ENCODE measurements at regions of chr5 and their contacts with region 1.

Region 1: DNA sequence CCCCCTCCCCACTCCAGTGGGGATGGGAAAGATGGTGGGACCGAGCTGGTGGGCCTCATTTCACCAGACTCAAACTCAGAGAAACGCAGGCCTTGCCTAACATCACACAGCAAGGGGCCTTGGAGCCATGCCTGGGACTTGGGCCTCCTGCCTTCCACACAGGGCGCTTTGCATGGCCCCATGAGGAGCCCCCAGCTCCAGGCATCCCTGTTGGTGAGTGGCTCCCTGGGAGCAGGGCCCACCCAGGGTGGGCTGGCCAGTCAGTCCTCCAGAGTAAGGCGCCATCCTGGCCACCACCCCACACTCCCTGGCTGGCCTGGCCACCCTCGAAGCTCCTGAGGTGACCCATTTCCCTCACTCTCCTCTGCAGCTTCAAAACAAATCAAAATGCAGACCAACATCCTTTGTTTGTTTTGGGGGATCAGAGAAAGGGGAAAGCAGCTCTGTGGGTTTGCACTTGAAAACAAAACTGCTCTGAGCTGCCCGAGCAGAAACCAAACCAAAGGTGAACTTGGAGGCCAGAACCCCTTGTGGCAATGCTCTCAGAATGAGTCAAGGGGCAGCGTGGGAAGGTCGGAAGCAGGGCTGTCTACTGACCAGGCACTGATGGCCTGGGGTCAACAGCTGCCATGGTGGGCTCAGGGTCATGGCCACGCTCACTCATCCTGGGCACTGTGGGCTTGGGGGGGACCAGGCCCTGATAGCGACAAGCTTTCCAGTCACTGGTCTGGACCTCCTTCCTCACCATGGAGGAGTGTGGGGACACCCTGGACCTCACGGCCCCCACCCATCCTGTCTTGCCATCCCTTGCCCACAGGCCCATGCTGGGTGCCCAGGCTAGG is 37.0 kb upstream of the VDAC1 start:
- DNase-seq: no peak
- H3K4me3 ChIP-seq: no peak overlapping the region
- H3K27me3 ChIP-seq: peaks cover 12% of the 10 kb centered on the region
- CTCF ChIP-seq: no peak

Region 2: GRCh38 chr5:133081703-133082102 is 960.1 kb before region 1 on chr5:
- CTCF ChIA-PET with region 1: no interaction called
- POLR2A ChIA-PET with region 1: no interaction called
- DNase-seq: no peak
- H3K4me3 ChIP-seq: no peak overlapping the region
- H3K27me3 ChIP-seq: no peaks in the 10 kb centered on the region
- CTCF ChIP-seq: no peak

Region 3: GRCh38 chr5:133552931-133553525 is 488.8 kb before region 1 on chr5:
- CTCF ChIA-PET with region 1: no interaction called
- POLR2A ChIA-PET with region 1: no interaction called
- DNase-seq: no peak
- H3K4me3 ChIP-seq: no peak overlapping the region
- H3K27me3 ChIP-seq: peaks cover 1% of the 10 kb centered on the region; the same call in 1 of the 2 replicates
- CTCF ChIP-seq: peak; percentile 83

Region 4: DNA sequence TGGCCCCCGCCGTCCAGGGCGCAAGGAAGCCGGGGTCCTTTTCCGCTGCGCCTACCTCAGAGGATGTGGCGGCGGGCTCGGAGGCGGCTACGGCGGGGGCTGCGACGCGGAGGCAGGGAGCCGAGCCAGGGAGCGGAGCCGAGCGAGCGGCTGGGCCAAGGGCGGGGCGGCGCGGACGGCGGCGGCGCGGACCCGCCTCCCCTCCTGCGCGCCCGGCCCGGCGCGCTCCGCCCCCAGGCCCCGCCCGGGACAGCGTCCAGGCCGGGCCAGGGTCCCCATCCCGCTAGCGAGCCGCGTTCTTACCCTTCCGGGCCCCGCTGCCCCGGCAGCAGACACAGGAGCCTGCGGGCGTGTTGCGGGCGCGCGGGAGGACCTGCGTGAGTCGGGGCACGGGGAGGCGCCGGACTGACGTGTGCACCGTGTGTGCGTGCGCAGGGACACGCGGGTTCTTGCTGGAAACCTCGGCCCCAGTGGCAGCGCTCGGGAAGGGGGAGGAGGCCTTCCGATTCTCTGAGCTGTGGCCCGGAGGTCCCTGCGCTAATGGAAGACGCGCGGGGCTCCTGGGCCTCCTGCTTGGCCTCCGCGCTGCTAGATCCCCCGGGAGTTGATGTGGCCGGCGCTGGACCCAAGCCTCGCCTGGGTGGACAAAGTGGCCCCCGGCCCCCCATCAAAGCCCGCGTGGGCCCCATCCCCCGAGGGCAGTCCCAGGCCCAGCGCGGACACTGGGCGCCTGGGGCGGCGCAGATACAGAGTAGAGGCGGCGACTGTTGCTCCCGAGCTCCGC is 37.0 kb before region 1 on chr5 and contains the start of gene VDAC1:
- CTCF ChIA-PET with region 1: interaction called, 18 read pairs
- POLR2A ChIA-PET with region 1: no interaction called
- DNase-seq: peak; percentile 26
- H3K4me3 ChIP-seq: peak within 1 kb of the TSS; percentile 74
- H3K27me3 ChIP-seq: no peaks in the 10 kb centered on the region
- CTCF ChIP-seq: no peak
- polyA plus RNA-seq, gene VDAC1: 187 and 195 TPM in 2 replicates

Region 5: DNA sequence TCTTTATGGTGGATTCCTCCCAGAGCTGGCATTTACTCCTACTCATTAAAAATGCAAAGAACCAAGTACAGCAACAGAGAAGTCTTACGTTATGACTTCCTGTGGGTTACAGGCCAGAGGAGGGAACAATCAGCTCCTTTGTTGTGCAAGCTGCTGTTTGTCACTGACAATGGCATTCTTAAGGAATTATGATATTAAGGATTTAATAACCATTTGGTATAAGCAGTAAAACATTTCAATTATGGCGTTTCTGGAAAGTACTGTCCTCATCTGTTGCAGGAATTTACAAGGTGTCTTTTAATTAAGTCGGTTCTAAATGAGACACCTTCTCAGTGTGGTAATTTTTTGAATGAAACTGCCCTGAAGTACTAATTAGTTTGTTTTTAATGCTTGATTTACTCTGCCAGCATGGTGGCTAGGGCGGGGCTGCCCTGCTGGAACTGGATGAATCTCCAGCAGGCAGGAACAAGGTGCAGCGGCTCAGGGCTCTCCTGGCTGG is 12.1 kb after region 1 on chr5:
- CTCF ChIA-PET with region 1: interaction called, 78 read pairs
- POLR2A ChIA-PET with region 1: no interaction called
- DNase-seq: no peak
- H3K4me3 ChIP-seq: no peak overlapping the region
- H3K27me3 ChIP-seq: peaks cover 7% of the 10 kb centered on the region
- CTCF ChIP-seq: no peak

Region 6: GRCh38 chr5:134125039-134126015 is 83.5 kb after region 1 on chr5:
- CTCF ChIA-PET with region 1: interaction called, 23 read pairs
- POLR2A ChIA-PET with region 1: no interaction called
- DNase-seq: peak; percentile 87
- H3K4me3 ChIP-seq: no peak overlapping the region
- H3K27me3 ChIP-seq: no peaks in the 10 kb centered on the region
- CTCF ChIP-seq: no peak

Region 7: GRCh38 chr5:134153657-134154056 is 111.9 kb after region 1 on chr5:
- CTCF ChIA-PET with region 1: interaction called, 381 read pairs
- POLR2A ChIA-PET with region 1: no interaction called
- DNase-seq: no peak
- H3K4me3 ChIP-seq: no peak overlapping the region
- H3K27me3 ChIP-seq: no peaks in the 10 kb centered on the region
- CTCF ChIP-seq: no peak

Region 8: DNA sequence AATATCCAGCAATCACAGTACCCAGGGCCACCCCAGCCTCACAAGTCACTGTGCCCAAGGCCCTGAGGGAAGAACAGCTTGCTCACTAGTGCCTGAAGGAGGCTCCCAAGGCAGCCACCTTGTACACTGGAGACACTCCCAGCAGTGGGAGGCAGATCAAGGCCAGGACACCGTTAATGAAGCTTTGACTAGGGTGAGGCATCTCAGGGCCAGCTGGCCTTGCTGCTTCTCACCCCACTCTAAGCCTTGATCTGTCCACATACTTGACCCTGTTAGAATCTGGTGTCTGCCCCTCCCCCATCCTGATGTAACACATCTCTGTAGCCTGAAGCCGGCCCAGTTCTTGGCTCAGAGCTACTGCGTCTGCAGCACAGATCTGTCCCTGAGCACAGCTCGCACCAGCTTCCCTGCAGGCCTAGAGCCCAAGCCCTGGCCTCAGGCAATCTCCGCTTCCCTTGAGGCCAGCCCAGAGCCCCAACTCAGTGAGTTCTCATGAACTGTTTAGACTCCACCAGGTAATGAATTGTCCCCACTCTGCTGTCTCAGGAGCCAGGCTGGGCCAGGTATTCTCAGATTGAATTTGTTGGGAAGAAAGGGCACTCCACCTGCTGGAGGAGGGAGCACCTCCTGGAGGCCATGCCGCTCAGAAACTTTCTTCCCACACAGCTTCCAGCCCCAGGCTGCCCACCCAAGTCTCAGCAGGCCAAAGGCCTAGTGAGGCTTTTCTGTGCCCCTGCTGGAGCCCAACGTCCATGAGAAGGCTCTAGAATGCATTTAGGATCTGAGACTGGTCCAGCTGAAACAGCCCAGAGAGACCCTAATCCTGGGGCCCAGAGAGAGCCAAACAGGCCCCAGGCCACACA is 470.2 kb after region 1 on chr5:
- CTCF ChIA-PET with region 1: no interaction called
- POLR2A ChIA-PET with region 1: no interaction called
- DNase-seq: no peak
- H3K4me3 ChIP-seq: no peak overlapping the region
- H3K27me3 ChIP-seq: no peaks in the 10 kb centered on the region
- CTCF ChIP-seq: peak; percentile 31